Astrocyte of the cerebellum (primary cell): ENCODE measurements at regions of chr7 and their contacts with region 1.

Region 1: GRCh38 chr7:139871267-139871721 is 42.2 kb downstream of the TBXAS1 start:
- DNase-seq: no peak
- H3K4me3 ChIP-seq: no peak overlapping the region
- CTCF ChIP-seq: no peak

Region 2: DNA sequence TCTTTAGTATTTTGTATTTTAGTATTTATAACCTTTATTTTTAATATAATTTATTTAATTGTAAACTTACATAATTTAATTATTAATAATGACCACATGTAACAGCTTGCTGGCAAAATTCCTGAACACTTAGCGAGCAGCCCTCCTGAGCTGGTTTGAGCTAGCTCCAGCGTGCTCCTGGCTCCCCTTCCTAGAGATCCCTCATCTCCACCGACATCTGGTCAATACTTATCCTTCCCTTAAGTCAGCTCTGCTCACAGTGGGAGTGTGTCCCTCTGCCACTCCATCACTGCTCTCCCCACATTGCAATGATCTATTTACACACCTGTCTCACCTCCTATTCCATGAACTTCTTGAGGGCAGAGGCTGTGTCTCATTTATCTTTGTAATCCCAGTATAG is 62.9 kb before region 1 on chr7:
- in situ Hi-C with region 1: no loop called
- DNase-seq: no peak
- H3K4me3 ChIP-seq: no peak overlapping the region
- CTCF ChIP-seq: no peak

Region 3: GRCh38 chr7:139838876-139839275 is 32.4 kb before region 1 on chr7:
- in situ Hi-C with region 1: no loop called
- DNase-seq: no peak
- H3K4me3 ChIP-seq: no peak overlapping the region
- CTCF ChIP-seq: no peak

Region 4: GRCh38 chr7:139909379-139910050 is 38.2 kb after region 1 on chr7:
- in situ Hi-C with region 1: no loop called
- DNase-seq: peak; percentile 26
- H3K4me3 ChIP-seq: no peak overlapping the region
- CTCF ChIP-seq: no peak

Region 5: DNA sequence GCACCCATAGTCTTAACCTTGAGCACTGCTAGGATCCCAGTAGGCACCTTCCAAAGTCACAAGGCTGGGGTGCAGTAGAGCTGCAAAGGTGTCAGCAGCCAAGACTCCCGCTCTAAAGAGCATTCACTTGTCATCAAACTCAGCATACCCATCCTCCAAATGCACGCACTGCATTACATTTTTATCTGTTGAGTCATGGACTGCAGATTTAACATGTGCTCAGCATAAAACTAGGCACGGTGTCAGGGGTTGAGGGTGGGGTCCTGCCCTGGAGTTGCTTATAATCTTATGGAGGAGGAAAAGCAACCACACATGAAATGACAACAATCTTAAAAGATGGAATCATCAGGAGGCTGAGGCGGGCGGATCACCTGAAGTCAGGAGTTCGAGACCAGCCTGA is 88.9 kb after region 1 on chr7:
- in situ Hi-C with region 1: loop called (anchors 5 kb)
- DNase-seq: no peak
- H3K4me3 ChIP-seq: no peak overlapping the region
- CTCF ChIP-seq: no peak